Activated B cell treated with CpG ODN at 0.5 μM for 24 hours (primary cell): ENCODE measurements at regions of chr19 and their contacts with region 1.

Region 1: DNA sequence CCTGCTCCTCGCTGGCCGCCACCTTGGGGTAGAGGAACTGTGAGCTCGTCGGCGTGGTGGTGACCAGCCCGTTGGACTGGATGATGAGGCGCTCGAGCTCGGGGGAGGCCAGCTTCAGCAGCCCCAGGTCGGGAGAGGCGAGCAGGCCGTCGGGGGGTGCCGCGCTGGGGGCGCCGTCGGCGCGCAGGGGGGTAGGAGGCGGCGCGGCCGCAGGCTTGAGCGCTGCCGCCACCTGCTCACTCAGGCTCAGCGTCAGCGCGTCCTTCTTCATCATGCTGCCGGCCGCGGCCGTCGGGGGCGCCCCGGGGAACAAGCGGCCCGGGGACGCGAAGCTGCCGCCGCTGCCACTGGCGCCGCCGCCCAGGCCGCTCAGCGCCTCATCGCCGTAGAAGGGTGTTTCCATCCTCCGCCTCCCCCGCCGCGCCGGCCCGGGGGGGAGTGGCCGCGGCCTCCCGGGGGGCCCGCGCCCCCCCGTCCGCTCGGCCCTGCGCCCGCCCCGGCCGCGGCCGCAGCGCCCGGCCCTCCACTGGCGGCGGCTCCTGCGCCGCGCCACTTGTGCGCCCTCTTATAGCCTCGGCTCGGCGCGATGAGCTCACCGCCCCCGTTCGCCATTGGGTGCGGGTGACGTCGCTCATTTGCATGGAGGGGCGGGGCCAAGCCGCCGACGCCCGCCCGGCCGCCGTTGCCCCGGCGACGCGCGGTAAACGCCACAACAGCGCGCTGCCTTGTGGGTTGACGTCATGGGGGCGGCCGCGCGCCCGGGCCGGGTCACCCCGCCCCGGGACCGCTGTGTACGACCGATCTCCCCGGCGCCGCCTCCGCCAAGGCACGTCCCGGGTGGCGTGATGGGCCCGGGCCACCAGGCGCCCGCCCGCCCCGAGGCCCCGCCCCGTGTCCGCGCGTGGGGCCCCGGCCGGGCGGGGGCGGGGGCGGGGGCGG is at the start of gene JUND:
- DNase-seq: peak; percentile 99
- ATAC-seq: peak; percentile 63
- H3K4me3 Mint-ChIP-seq: peak within 1 kb of the TSS; percentile 96
- H3K27ac Mint-ChIP-seq: peak within 1 kb of the TSS; percentile 97
- H3K4me1 Mint-ChIP-seq: peaks cover 48% of the 10 kb centered on the region
- H3K27me3 Mint-ChIP-seq: no peaks in the 10 kb centered on the region
- CTCF ChIP-seq: no peak
- total RNA-seq, gene JUND: 206 and 225 TPM in 2 replicates

Region 2: GRCh38 chr19:18000935-18001778 is 280.2 kb before region 1 on chr19:
- CTCF ChIA-PET with region 1: no interaction called
- POLR2A ChIA-PET with region 1: interaction called, 10 read pairs
- intact Hi-C with region 1: no loop called
- DNase-seq: peak; percentile 92
- ATAC-seq: peak; percentile 82
- H3K4me3 Mint-ChIP-seq: peak overlapping the region; percentile 92
- H3K27ac Mint-ChIP-seq: peak overlapping the region; percentile 96
- H3K4me1 Mint-ChIP-seq: peaks cover 37% of the 10 kb centered on the region
- H3K27me3 Mint-ChIP-seq: no peaks in the 10 kb centered on the region
- CTCF ChIP-seq: no peak

Region 3: GRCh38 chr19:18173572-18174288 is 107.6 kb before region 1 on chr19 and contains the start of gene IFI30:
- CTCF ChIA-PET with region 1: no interaction called
- POLR2A ChIA-PET with region 1: interaction called, 28 read pairs
- intact Hi-C with region 1: loop called (anchors 1 kb)
- DNase-seq: peak; percentile 85
- ATAC-seq: peak; percentile 62
- H3K4me3 Mint-ChIP-seq: peak within 1 kb of the TSS; percentile 94
- H3K27ac Mint-ChIP-seq: peak within 1 kb of the TSS; percentile 92
- H3K4me1 Mint-ChIP-seq: peaks cover 90% of the 10 kb centered on the region
- H3K27me3 Mint-ChIP-seq: no peaks in the 10 kb centered on the region
- CTCF ChIP-seq: no peak
- total RNA-seq, gene IFI30: 251 and 255 TPM in 2 replicates

Region 4: DNA sequence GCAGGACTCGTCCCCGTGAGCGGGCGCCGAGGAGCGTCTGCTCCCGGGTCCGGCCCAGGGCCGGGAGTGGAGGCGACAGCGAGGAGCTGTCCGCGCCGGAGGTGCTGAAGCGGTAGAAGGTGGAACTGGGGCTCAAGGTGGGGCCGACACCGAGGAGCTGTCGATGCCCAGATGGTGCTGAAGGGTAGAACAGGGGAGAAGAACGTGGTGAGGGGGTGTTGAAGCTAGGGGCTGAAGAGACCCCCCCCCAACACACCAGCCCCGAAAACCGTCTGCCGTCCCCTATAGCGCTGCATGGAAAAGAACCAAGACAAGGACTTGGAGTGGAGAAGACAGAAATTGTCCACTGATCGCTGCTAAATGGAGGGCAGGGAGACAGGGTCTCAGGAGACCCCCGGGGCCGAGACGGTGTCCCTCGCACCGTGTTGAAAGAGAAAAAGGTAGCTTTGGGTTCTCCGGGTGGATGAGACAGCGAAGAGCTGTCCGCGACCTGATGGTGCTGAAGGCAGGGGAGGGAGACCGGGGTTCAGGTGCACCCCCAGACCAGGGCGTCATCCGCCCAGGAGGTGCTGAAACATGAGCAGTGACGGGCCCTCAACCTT is 48.0 kb before region 1 on chr19:
- CTCF ChIA-PET with region 1: no interaction called
- POLR2A ChIA-PET with region 1: interaction called, 14 read pairs
- intact Hi-C with region 1: no loop called
- DNase-seq: peak; percentile 53
- ATAC-seq: peak; percentile 85
- H3K4me3 Mint-ChIP-seq: no peak overlapping the region
- H3K27ac Mint-ChIP-seq: peak overlapping the region; percentile 50
- H3K4me1 Mint-ChIP-seq: peaks cover 17% of the 10 kb centered on the region
- H3K27me3 Mint-ChIP-seq: peaks cover 52% of the 10 kb centered on the region
- CTCF ChIP-seq: no peak

Region 5: GRCh38 chr19:18304458-18305310 is 23.3 kb after region 1 on chr19:
- CTCF ChIA-PET with region 1: interaction called, 100 read pairs
- POLR2A ChIA-PET with region 1: interaction called, 857 read pairs
- intact Hi-C with region 1: loop called (anchors 1 kb)
- DNase-seq: peak; percentile 74
- ATAC-seq: peak; percentile 73
- H3K4me3 Mint-ChIP-seq: peak overlapping the region; percentile 85
- H3K27ac Mint-ChIP-seq: peak overlapping the region; percentile 95
- H3K4me1 Mint-ChIP-seq: peaks cover 54% of the 10 kb centered on the region
- H3K27me3 Mint-ChIP-seq: no peaks in the 10 kb centered on the region
- CTCF ChIP-seq: no peak

Region 6: DNA sequence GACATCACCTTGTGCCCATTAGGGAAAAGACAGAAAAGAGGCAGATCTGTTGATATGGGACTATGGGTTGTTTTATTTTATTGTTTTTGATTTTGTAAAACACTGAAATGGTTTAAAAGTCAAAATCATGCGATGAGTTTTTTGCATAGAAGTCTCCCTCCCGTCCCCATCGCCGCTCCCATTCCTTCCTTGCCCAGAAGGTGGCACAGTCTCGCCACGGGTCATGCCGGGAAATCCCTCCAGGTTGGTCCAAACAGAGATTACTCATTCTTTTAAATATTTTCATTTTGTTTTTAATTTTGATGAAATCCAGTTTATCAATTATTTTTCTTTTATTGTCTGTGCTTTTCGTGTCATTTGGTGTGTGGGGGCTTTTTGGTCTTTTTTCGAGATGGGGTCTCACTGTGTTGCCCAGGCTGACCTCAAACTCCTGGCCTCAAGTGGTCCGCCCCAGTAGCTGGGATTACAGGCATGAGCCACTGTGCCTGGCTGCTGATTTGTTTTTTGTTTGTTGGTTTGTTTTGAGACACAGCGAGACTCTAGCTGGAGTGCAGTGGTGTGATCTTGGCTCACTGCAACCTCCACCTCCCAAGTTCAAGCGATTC is 68.3 kb after region 1 on chr19:
- CTCF ChIA-PET with region 1: interaction called, 16 read pairs
- POLR2A ChIA-PET with region 1: interaction called, 15 read pairs
- intact Hi-C with region 1: no loop called
- DNase-seq: peak; percentile 28
- ATAC-seq: peak; percentile 52
- H3K4me3 Mint-ChIP-seq: no peak overlapping the region
- H3K27ac Mint-ChIP-seq: no peak overlapping the region
- H3K4me1 Mint-ChIP-seq: no peaks in the 10 kb centered on the region
- H3K27me3 Mint-ChIP-seq: no peaks in the 10 kb centered on the region
- CTCF ChIP-seq: no peak

Region 7: DNA sequence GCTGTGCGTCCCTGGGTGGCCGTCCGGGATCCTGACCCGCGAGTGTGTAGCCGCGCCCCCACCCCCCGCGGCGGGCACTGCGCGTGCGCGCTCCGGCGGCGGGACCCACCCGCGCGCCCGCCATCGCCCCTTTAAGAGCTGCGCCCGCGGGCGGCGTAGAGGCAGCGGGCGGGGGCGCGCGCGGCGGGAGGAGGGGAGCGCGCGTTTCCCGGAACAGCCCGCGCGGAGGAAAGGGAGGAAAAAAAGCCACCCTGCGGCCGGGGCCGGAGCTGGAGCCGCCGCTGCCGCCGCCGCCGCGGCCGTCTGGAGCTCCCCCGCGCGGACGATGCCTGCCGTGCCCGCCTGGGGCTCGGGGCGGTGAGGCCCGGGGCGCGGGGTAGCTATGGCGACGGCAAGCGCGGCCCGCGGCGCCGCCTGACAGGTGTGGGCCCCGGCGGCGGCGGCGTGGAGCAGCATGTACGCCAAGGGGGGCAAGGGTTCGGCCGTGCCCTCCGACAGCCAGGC is 137.9 kb after region 1 on chr19 and contains the start of gene SSBP4:
- CTCF ChIA-PET with region 1: interaction called, 16 read pairs
- POLR2A ChIA-PET with region 1: interaction called, 47 read pairs
- intact Hi-C with region 1: no loop called
- DNase-seq: peak; percentile 72
- ATAC-seq: peak; percentile 67
- H3K4me3 Mint-ChIP-seq: peak within 1 kb of the TSS; percentile 77
- H3K27ac Mint-ChIP-seq: peak within 1 kb of the TSS; percentile 12
- H3K4me1 Mint-ChIP-seq: peaks cover 73% of the 10 kb centered on the region
- H3K27me3 Mint-ChIP-seq: peaks cover 33% of the 10 kb centered on the region
- CTCF ChIP-seq: no peak
- total RNA-seq, gene SSBP4: 28.5 and 36.6 TPM in 2 replicates